PC-9 (cell line): ENCODE measurements at regions of chr6 and their contacts with region 1.

Region 1: DNA sequence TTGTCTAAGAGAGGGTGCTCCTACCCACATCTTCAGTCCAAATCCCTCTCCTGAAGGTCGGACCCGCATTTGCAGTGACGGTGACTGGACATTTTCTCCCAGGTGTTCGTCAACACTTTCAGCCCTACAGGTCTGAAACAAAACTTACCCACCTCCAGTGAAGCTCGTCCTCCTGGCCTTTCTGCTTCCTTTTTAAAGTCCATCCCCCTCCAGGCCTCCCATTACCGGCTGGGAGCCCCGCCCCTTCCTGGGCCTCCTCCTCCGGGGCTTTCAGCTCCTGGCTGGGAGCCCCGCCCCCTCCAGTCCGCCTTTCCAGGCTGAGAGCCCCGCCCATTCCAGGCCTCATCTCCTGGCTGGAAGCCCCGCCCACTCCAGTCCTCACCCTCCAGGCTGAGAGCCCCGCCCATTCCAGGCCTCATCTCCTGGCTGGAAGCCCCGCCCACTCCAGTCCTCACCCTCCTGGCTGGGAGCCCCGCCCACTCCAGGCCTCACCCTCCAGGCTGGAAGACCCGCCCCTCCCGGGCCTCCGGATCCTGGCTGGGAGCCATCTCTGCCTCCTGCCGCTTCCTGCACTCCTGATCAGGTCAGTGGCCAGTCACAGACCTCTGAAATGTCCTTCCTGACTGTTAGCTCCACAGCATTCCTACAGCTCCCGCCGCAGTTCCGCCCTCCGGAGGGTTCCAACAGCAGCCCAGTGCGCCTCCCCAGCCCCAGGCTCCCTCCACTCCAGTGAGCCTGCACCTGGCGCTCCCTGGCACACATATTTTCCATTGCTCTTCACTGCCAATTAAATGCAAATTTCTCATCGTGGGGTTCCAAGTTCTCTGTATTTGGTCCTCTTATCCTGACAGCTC is 98.5 kb downstream of the LY86 start:
- DNase-seq: peak; percentile 92 to 100
- H3K4me3 ChIP-seq: peak overlapping the region; percentile 73
- H3K27ac ChIP-seq: peak overlapping the region; percentile 91
- H3K4me1 ChIP-seq: peaks cover 67% of the 10 kb centered on the region
- H3K27me3 ChIP-seq: no peaks in the 10 kb centered on the region
- CTCF ChIP-seq: no peak

Region 2: DNA sequence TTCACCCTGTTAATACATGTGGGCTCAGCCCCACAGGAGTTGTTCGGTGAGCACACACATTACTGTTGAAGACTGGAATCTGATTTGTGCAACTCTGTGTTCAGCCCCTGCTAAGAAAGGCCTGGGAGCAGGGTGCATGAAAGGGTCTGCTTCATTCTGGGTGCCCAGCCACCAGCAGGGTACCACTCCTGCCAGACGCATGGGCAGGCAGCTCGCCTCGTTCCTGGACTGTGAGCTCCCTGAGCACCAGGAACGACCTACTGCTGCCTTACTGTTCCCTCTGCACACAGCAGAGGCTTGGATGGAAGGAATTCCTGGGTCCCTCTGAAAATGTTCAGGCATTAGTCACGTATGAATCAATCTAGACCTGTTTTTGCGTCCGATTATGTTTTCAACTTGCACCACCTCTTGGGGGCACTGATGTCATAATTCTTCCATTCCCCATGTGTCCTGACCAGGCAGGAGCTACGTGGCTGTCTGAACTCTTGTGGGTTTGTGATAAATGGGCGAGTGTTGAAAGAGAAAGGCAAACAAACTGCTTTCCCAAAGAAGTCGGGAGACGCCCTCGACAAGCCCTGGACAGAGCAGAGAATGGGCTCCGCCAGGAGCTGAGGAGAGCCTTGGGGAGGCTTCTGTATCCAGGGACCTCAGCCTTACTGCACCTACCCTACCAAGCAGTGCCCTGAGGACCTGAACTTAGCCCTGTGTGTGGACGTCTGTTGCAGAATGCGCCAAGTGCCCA is 25.5 kb after region 1 on chr6:
- CTCF ChIA-PET with region 1: no interaction called
- POLR2A ChIA-PET with region 1: interaction called, 4 read pairs
- intact Hi-C with region 1: loop called (anchors 2 kb)
- DNase-seq: peak; percentile 79 to 96
- H3K4me3 ChIP-seq: peak overlapping the region; percentile 23; the same call in 1 of the 2 replicates
- H3K27ac ChIP-seq: peak overlapping the region; percentile 83
- H3K4me1 ChIP-seq: peaks cover 21% of the 10 kb centered on the region
- H3K27me3 ChIP-seq: no peaks in the 10 kb centered on the region
- CTCF ChIP-seq: no peak; the same call in 1 of the 2 replicates

Region 3: GRCh38 chr6:7201688-7202541 is 514.9 kb after region 1 on chr6:
- CTCF ChIA-PET with region 1: no interaction called
- POLR2A ChIA-PET with region 1: interaction called, 15 read pairs
- intact Hi-C with region 1: no loop called
- DNase-seq: no peak
- H3K4me3 ChIP-seq: no peak overlapping the region; the same call in 1 of the 2 replicates
- H3K27ac ChIP-seq: peak overlapping the region; percentile 92
- H3K4me1 ChIP-seq: peaks cover 36% of the 10 kb centered on the region
- H3K27me3 ChIP-seq: no peaks in the 10 kb centered on the region
- CTCF ChIP-seq: no peak

Region 4: DNA sequence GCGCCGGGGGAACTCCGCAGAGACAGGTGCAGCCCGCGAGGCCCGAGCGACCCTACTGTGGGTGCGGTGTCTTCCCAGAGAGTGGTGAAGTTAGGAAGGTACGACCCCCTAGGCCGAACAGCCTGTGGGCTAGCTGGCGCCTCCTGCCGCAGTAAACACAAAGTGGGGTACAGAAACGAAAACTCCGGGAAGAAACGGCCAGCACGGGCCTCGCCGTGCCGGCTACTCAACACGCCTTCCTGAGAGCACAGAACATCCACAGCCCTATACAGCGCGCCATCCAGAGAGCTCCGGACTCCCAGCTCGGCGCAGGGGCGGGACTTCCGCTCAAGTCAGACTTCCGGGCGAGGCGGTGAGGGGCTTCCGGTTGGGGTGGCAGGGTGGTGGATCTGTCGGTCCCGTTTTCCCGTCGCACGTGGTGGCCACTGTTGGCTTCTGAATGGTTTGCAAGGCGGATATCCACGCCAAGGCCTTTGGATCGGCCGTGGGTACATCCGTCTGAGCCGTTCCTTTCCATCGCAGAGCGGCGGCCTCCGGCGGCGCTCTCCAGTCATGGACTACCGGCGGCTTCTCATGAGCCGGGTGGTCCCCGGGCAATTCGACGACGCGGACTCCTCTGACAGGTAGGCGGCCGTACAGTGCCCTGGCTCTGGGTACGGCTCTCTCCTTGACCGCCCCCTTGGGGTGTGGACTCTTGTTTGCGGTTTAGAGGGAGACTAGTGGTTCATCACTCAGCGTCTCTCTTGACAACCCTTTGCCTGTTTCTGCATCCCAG is 702.7 kb after region 1 on chr6 and contains the starts of genes CAGE1 and RIOK1:
- CTCF ChIA-PET with region 1: no interaction called
- POLR2A ChIA-PET with region 1: interaction called, 36 read pairs
- intact Hi-C with region 1: no loop called
- DNase-seq: peak; percentile 86 to 96
- H3K4me3 ChIP-seq: peak within 1 kb of the TSS; percentile 80
- H3K27ac ChIP-seq: peak within 1 kb of the TSS; percentile 89
- H3K4me1 ChIP-seq: peaks cover 19% of the 10 kb centered on the region
- H3K27me3 ChIP-seq: no peaks in the 10 kb centered on the region
- CTCF ChIP-seq: 0 out of 2 replicates have a peak, but pooled peaks have one; percentile 29
- total RNA-seq, gene CAGE1: 0.13 TPM in 2 replicates
- total RNA-seq, gene RIOK1: 16.9 and 24.9 TPM in 2 replicates